Transverse colon (tissue), 4 donors: ENCODE measurements at regions of chr2 and their contacts with region 1.

Region 1: DNA sequence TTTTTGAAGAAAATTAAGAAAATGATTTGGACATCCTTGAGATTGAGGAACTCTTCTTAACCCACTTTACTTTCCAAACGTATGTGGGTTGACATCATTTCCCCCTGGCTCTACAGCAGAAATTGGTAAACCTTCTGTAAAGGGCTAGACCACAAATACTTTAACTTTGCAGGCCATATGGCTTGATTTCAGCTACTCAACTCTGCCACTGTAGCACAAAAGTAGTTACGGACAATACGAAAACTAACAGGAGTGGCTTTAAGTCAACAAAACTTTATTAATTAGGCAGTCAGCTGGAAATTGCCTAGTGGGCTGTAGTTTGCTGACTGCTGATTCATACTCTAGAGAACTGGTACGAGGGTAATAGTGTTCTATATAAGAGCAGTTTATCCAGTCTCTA is 83.2 kb upstream of the DTNB start:
- DNase-seq: no peak
- H3K4me3 ChIP-seq: no peak overlapping the region
- H3K27ac ChIP-seq: no peak overlapping the region
- H3K4me1 ChIP-seq: peaks cover 0 to 12% (median 0%) of the 10 kb centered on the region in 4 donors
- H3K27me3 ChIP-seq: no peaks in the 10 kb centered on the region
- CTCF ChIP-seq: no peak
- EP300 ChIP-seq: no peak
- POLR2A ChIP-seq: no peak

Region 2: DNA sequence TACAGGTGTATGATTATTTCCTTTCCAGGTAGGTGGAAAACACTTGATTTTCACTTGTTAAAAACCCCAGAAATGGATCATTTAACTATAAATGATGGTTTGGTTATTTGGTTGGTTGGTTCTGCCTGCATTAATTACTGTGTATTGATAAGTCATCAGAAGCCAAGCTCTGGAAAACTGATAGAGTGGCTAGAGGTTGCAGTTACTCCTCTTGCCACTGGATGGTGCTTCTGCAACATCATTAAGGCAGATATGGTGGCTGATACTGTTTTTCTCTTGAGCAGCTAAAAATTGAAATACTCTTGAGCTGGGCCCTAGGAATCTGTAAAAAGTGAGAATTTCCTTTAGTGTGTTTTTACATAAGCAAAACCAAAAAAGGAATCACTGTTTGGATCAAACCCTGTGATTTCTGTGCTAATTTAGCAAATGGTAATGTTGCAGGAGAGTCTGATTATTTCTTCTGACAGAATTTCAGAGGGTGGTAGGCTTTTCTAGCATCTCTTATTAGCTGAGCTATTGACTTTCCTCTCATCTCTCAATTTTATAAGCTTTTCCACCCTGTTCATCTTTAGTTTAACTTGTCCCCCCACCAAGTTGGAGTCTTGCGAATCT is 331.6 kb after region 1 on chr2:
- in situ Hi-C with region 1: no loop called
- intact Hi-C with region 1: no loop called
- DNase-seq: no peak
- H3K4me3 ChIP-seq: no peak overlapping the region
- H3K27ac ChIP-seq: no peak overlapping the region
- H3K4me1 ChIP-seq: peaks cover 3 to 17% (median 4%) of the 10 kb centered on the region in 4 donors
- H3K27me3 ChIP-seq: no peaks in the 10 kb centered on the region
- CTCF ChIP-seq: peak; percentile 68 to 75 (median 72)
- EP300 ChIP-seq: no peak
- POLR2A ChIP-seq: no peak

Region 3: DNA sequence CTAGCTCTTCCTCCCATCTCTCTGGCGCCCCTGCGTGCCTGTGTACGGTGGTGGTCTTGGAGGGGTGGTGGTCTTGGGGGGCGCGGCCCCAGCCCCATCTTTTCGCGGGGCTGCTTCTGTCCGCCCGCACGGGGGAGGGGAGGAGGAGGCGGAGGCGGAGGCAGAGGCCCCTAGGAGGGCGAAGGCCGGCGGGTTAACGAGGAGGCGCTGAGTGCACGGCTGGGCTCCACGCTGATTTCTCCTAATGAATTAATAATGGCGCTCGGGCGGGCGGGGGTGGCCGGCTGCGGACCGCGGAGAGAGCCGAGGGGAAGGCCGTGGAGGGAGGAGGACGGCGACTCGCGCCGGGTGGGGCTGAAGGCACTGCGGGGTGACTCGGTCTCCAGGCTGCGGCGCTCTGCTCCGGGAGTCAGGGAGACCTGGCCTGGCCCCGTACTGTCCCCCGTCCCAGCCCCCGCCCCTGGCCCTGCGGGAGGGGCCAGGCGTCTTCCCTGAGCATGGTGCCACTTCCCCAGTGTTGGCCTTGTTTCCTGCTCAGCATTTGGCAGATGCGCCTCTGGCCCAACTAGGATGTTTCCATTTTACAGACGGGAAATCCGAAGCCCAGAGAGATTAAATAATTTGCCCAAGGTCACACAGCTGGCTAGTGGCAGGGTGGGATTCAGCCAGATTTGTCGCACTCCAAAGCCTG is 422.4 kb after region 1 on chr2:
- in situ Hi-C with region 1: no loop called
- intact Hi-C with region 1: loop called (anchors 10 kb)
- DNase-seq: peak; percentile 56
- H3K4me3 ChIP-seq: peak overlapping the region; percentile 33 to 72 (median 52)
- H3K27ac ChIP-seq: no peak overlapping the region
- H3K4me1 ChIP-seq: peaks cover 7 to 16% (median 10%) of the 10 kb centered on the region in 4 donors
- H3K27me3 ChIP-seq: peaks cover 32% of the 10 kb centered on the region
- CTCF ChIP-seq: no peak
- EP300 ChIP-seq: no peak
- POLR2A ChIP-seq: no peak